Activated CD8-positive, alpha-beta T cell treated with anti-CD3 and anti-CD28 coated beads, Interleukin-2, amount 10 ng/mL, durations not matched to agents 7 days and 5 days (primary cell): ENCODE measurements at regions of chr3 and their contacts with region 1.

Region 1: DNA sequence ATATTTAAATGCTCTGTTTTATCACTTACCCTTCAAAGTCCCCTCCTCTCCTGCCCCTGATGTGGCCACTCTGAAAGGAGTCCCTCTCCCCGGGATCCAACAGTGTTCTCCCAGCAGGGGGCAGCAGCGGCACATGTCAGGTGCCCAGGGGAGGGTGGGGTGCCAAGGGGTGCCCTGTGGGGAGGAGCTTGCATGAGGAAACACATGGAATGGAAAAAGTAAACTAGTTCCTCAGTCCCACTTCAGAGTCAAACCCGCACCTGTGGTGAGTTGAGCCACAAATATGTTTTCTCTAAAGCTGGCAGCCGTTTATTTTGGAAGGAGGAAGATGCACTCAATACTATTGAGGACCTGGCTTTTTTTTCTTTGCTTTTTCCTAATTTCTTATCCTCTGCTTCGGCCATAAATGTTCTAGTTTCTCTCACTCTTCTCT is 30.1 kb upstream of the NRROS start:
- DNase-seq: peak; percentile 97
- ATAC-seq: peak; percentile 86
- H3K4me3 Mint-ChIP-seq: peak overlapping the region; percentile 64
- H3K27ac Mint-ChIP-seq: peak overlapping the region; percentile 81
- H3K4me1 Mint-ChIP-seq: peaks cover 56% of the 10 kb centered on the region
- H3K27me3 Mint-ChIP-seq: no peaks in the 10 kb centered on the region

Region 2: GRCh38 chr3:196528639-196529233 is 80.6 kb before region 1 on chr3:
- CTCF ChIA-PET with region 1: interaction called, 11 read pairs
- POLR2A ChIA-PET with region 1: no interaction called
- DNase-seq: peak; percentile 84
- ATAC-seq: peak; percentile 100
- H3K4me3 Mint-ChIP-seq: peak overlapping the region; percentile 62
- H3K27ac Mint-ChIP-seq: peak overlapping the region; percentile 25
- H3K4me1 Mint-ChIP-seq: peaks cover 11% of the 10 kb centered on the region
- H3K27me3 Mint-ChIP-seq: peaks cover 13% of the 10 kb centered on the region

Region 3: GRCh38 chr3:196632046-196632751 is 22.8 kb after region 1 on chr3:
- CTCF ChIA-PET with region 1: interaction called, 107 read pairs
- POLR2A ChIA-PET with region 1: interaction called, 83 read pairs
- DNase-seq: peak; percentile 97
- ATAC-seq: peak; percentile 87
- H3K4me3 Mint-ChIP-seq: peak overlapping the region; percentile 94
- H3K27ac Mint-ChIP-seq: peak overlapping the region; percentile 99
- H3K4me1 Mint-ChIP-seq: peaks cover 79% of the 10 kb centered on the region
- H3K27me3 Mint-ChIP-seq: no peaks in the 10 kb centered on the region

Region 4: GRCh38 chr3:196677353-196677752 is 68.0 kb after region 1 on chr3:
- CTCF ChIA-PET with region 1: interaction called, 16 read pairs
- POLR2A ChIA-PET with region 1: no interaction called
- DNase-seq: no peak
- ATAC-seq: no peak
- H3K4me3 Mint-ChIP-seq: no peak overlapping the region
- H3K27ac Mint-ChIP-seq: no peak overlapping the region
- H3K4me1 Mint-ChIP-seq: peaks cover 13% of the 10 kb centered on the region
- H3K27me3 Mint-ChIP-seq: peaks cover 3% of the 10 kb centered on the region

Region 5: DNA sequence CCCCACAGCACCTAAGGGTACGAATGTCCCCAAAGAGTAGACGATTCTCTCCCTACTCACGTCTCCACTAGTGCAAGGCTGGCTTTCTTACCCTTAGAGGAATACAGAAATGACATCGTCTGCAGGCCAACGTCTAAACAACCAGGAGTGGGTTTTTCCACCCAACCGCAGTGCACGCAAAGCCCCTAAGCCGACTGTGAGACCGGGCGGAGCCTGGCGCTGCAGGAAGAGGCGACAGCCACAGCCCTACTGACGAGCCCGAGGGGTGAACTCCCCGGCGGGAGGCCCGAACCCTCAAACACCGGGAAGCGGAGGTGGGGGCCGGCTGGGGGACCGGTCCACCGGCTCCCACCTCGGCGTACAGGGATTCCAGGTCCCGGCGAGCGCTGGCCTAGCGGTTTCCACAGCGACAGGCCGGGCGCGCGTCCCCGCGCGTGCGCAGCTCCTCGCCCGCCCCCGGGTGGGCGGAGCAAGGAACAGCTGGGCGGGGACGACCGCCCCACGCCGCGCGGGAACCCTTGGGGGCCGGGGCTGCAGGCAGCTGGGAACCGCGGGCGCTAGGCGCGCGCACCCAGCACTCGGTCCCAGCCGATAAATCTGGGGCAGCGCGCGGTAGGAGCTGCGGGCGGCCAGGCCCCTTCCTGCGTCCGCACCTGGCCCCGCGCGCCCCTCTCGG is 102.6 kb after region 1 on chr3 and contains the starts of genes CEP19 and PIGX:
- CTCF ChIA-PET with region 1: interaction called, 16 read pairs
- POLR2A ChIA-PET with region 1: interaction called, 4 read pairs
- DNase-seq: peak; percentile 91
- ATAC-seq: peak; percentile 87
- H3K4me3 Mint-ChIP-seq: peak within 1 kb of the TSS; percentile 86
- H3K27ac Mint-ChIP-seq: peak within 1 kb of the TSS; percentile 91
- H3K4me1 Mint-ChIP-seq: peaks cover 37% of the 10 kb centered on the region
- H3K27me3 Mint-ChIP-seq: no peaks in the 10 kb centered on the region
- total RNA-seq, gene CEP19: 4.6 to 5.6 TPM
- total RNA-seq, gene PIGX: 41.5 to 42.1 TPM

Region 6: DNA sequence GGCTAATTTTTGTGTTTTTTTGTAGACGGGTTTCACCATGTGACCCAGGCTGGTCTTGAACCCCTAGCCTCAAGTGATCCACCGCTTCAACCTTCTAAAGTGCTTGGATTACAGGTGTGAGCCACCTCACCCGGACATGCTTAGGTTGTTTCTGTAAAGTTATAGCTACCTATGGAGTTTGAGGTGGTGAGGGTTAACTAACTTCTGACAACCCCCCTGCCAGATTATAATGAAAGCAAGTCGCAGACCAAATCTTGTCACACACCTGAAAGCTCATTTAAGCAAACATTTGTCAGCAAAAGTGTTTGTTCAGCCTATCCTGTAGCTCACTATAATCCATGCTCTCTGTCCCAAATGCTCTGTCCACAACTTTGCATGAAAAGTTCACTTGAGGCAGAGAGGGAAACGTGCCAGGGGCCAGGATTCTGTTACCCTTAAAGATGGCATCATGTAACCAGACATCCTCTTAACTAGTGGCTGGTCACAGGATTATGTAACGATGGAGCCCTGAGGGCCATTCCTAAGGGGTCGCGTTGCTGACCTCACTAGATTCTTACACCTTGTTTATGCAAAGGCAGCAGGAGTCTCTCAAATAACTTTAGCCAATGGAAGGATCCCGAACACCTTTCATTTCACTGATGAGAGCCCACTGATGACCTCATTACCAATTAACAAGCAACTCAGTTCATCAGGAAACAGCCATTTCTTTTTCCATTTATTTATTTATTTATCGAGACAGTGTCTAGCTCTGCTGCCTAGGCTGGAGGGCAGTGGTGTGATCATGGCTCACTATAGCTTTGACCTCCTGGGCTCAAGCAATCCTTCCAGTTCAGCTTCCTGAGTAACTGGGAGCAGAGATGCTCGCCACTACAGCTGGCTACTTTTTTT is 234.3 kb after region 1 on chr3:
- CTCF ChIA-PET with region 1: no interaction called
- POLR2A ChIA-PET with region 1: no interaction called
- DNase-seq: no peak
- ATAC-seq: no peak
- H3K4me3 Mint-ChIP-seq: no peak overlapping the region
- H3K27ac Mint-ChIP-seq: no peak overlapping the region
- H3K4me1 Mint-ChIP-seq: no peaks in the 10 kb centered on the region
- H3K27me3 Mint-ChIP-seq: no peaks in the 10 kb centered on the region